ENCODE measurements at regions of chr2 and their contacts with region 1.

Region 1: DNA sequence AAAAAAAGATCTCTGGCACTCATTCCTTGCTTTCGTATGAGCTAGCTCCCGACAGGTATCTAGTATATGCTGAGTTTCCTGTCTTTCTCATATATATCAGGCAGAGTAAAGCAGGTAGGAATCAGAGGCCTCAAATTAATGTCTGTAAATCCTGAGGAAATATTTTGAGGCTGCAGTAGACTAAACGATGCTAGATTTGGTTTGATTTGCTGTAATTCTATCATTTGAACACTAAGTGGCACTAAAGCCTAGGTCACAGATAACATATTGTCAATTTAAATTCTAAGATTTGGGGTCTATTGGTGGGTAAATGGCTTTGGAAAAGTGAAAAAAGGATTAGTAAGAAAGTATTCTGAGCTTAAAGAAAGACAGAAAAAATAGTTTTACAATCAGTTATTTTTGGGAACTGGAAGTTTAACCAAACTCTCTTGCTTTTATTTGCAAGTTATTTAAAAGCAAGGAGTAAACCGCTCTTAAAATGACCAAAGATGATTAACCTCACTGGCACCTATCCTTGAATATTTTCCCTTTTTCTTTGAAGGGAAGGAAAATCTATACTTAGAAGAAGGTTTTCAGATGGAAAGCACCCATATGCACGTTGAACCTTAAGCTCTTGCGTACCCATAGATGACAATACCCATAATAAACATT is 37.6 kb upstream of the SLC4A10 start:
- DNase-seq: peak in 1 of 42 donors; percentile 3

Region 2: DNA sequence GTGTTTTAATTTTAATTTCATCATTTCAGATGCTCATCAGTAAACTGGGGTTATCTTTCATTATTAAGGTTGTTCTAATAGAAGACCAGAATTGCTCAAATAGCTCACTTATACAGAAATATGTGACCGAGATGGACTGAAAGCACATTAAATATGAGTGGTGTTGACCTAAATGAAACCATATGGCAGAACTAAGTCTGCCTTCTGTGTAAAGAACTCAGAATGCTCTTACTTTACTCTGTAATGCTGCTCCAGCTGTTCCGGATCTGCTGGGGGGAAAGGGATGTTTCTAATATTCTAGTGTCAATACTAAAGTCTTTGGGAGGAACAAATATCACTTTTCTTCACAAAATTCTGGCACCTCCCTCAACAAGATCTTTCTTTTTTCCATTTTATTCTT is 356.4 kb after region 1 on chr2:
- intact Hi-C with region 1: loop called (anchors 5 kb)
- DNase-seq: no peak

Measured in head of caudate nucleus (tissue), 42 donors.